A673 (cell line): ENCODE measurements at regions of chr2 and their contacts with region 1.

Region 1: DNA sequence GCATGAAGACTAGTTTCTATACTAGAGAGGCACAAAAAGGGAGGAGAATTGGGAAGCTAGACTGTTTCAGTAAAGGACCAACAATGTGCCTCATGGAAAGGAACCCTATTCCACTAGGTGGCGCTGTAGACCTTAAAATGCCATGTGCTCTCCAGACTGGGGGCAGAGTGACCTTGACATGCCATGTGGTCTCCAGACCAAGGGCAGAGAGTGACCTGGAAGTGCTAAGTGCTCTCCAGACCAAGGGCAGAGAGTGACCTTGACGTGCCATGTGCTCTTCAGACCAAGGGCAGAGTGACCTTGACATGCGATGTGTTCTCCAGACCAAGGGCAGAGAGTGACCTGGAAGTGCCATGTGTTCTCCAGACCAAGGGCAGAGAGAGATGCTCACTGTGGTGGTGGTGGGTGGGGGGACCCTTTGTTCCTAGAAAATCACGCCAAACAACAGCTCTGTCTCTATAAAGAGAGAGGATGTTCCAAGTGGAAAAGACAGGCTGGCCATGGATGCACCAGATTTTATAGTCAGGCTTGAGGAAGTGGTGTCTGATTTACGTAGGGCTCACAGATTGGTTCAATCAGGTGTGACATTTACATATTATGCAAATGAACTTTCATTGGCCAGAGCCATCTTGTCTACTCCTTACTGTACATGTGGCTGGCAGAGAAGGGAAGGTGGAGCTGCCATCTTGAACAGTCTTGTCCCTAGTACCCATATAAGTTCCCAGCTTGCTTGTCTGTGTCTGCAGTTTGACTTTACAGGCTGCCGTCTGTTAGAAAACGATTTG is 344.0 kb upstream of the DDX18 start:
- DNase-seq: peak; percentile 63
- H3K4me3 ChIP-seq: no peak overlapping the region
- H3K27ac ChIP-seq: no peak overlapping the region
- H3K4me1 ChIP-seq: no peaks in the 10 kb centered on the region
- H3K27me3 ChIP-seq: no peaks in the 10 kb centered on the region
- CTCF ChIP-seq: peak; percentile 70

Region 2: DNA sequence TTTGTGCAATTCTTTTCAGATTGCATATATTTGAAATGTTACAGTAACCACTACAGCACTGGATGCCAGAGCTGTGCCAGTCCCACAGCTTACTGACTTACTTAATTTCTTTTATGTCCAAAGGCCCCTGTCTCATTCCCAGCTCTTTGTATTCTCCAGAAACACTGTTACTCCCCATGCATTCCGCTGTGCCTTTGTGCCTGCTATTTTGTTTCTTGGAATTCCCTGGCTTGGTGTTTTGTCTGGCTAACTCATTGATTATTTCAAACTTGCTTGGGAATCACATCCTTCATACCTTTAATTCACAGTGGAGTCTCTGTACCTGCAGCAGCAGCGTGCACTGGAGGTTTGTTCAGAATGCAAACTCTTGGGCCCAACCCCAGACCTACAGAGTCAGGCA is 257.9 kb before region 1 on chr2:
- CTCF ChIA-PET with region 1: no interaction called
- POLR2A ChIA-PET with region 1: no interaction called
- intact Hi-C with region 1: no loop called
- DNase-seq: no peak
- H3K4me3 ChIP-seq: no peak overlapping the region
- H3K27ac ChIP-seq: no peak overlapping the region
- H3K4me1 ChIP-seq: no peaks in the 10 kb centered on the region
- H3K27me3 ChIP-seq: no peaks in the 10 kb centered on the region
- CTCF ChIP-seq: no peak

Region 3: GRCh38 chr2:117771969-117772630 is 301.6 kb after region 1 on chr2:
- CTCF ChIA-PET with region 1: no interaction called
- POLR2A ChIA-PET with region 1: no interaction called
- intact Hi-C with region 1: loop called (anchors 5 kb)
- DNase-seq: peak; percentile 50
- H3K4me3 ChIP-seq: no peak overlapping the region
- H3K27ac ChIP-seq: no peak overlapping the region
- H3K4me1 ChIP-seq: no peaks in the 10 kb centered on the region
- H3K27me3 ChIP-seq: no peaks in the 10 kb centered on the region
- CTCF ChIP-seq: peak; percentile 58

Region 4: GRCh38 chr2:117785740-117786139 is 315.2 kb after region 1 on chr2:
- CTCF ChIA-PET with region 1: interaction called, 9 read pairs
- POLR2A ChIA-PET with region 1: no interaction called
- intact Hi-C with region 1: loop called (anchors 2 kb)
- DNase-seq: peak; percentile 67
- H3K4me3 ChIP-seq: no peak overlapping the region
- H3K27ac ChIP-seq: no peak overlapping the region
- H3K4me1 ChIP-seq: no peaks in the 10 kb centered on the region
- H3K27me3 ChIP-seq: no peaks in the 10 kb centered on the region
- CTCF ChIP-seq: peak; percentile 70

Region 5: DNA sequence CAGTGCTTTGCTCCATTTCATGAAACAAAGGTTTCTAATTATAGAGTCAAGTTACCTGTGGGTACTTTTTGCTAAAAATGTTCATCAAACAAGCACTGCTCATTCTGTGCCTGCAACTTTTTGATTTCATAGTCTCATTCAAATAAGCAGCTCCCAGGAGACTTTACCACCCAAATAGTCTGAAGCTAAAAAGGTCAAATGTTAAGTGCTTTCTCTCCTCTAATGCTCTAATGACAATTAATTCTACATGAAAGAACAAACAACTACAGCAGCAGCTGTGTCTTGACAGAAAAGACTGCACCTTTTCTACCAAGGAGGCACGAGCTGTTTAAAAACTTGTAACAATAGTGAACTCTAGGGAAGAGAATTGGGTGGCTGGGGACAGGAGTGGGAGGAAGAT is 478.1 kb after region 1 on chr2:
- CTCF ChIA-PET with region 1: no interaction called
- POLR2A ChIA-PET with region 1: no interaction called
- intact Hi-C with region 1: no loop called
- DNase-seq: no peak
- H3K4me3 ChIP-seq: no peak overlapping the region
- H3K27ac ChIP-seq: no peak overlapping the region
- H3K4me1 ChIP-seq: no peaks in the 10 kb centered on the region
- H3K27me3 ChIP-seq: no peaks in the 10 kb centered on the region
- CTCF ChIP-seq: no peak